ENCODE measurements at regions of chr14 and their contacts with region 1.

Region 1: DNA sequence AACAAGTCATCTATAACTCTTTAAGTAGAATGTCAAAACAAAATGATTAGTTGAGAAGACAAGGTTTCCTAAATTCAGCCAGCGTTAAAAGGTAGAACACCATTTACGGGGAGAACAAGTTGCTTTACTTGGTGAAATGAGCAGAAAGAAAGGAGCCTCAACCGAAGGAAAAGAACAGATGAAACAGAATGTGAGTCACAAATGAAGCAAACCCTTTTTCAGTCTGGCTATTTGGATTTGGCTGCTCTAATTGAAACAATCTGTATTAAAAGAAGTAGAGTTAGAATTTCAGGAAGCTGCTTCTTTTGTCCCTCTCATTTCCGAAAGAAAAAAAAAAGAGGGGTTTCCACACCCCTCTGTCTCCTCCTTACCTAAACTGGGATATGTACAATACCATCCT is 34.6 kb downstream of the CEP128 start:
- DNase-seq: no peak
- H3K4me3 Mint-ChIP-seq: no peak overlapping the region
- H3K27ac Mint-ChIP-seq: no peak overlapping the region
- H3K4me1 Mint-ChIP-seq: peaks cover 7% of the 10 kb centered on the region
- H3K27me3 Mint-ChIP-seq: no peaks in the 10 kb centered on the region

Region 2: GRCh38 chr14:80770114-80770908 is 136.6 kb before region 1 on chr14:
- CTCF ChIA-PET with region 1: no interaction called
- intact Hi-C with region 1: no loop called
- DNase-seq: no peak
- H3K4me3 Mint-ChIP-seq: no peak overlapping the region
- H3K27ac Mint-ChIP-seq: no peak overlapping the region
- H3K4me1 Mint-ChIP-seq: peaks cover 7% of the 10 kb centered on the region
- H3K27me3 Mint-ChIP-seq: no peaks in the 10 kb centered on the region

Region 3: GRCh38 chr14:80862983-80863382 is 44.0 kb before region 1 on chr14:
- CTCF ChIA-PET with region 1: no interaction called
- intact Hi-C with region 1: loop called (anchors 1 kb)
- DNase-seq: no peak
- H3K4me3 Mint-ChIP-seq: no peak overlapping the region
- H3K27ac Mint-ChIP-seq: no peak overlapping the region
- H3K4me1 Mint-ChIP-seq: no peaks in the 10 kb centered on the region
- H3K27me3 Mint-ChIP-seq: no peaks in the 10 kb centered on the region